GM12878 (cell line): ENCODE measurements at regions of chrX and their contacts with region 1.

Region 1: GRCh38 chrX:101442085-101442484 is 34.1 kb downstream of the HNRNPH2 start:
- DNase-seq: no peak
- ATAC-seq: no peak
- H3K4me3 ChIP-seq: no peak overlapping the region
- H3K27ac ChIP-seq: no peak overlapping the region
- H3K4me1 ChIP-seq: no peaks in the 10 kb centered on the region
- H3K27me3 ChIP-seq: no peaks in the 10 kb centered on the region
- CTCF ChIP-seq: no peak
- EP300 ChIP-seq: no peak
- POLR2A ChIP-seq: no peak
- RAD21 ChIP-seq: no peak

Region 2: DNA sequence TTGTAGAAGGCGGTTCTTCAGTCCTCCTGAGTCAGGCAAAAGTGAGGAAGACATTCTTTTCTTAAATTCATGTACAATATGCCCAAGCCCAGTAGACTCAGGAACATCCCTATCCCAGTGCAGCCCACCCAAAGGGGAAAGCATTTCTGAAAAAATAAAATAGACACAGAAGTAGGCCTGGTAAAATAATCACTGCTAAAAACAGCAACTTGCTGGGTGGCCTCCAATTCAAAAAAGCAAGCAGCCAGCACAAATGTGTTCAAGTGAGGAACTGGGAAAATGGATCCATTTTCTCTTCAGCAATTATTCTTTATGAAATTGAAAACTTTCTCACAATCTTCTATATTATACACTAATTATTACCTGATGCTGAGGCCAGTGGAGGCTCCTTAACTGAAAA is 1197.4 kb before region 1 on chrX:
- CTCF ChIA-PET with region 1: no interaction called
- POLR2A ChIA-PET with region 1: no interaction called
- RAD21 ChIA-PET with region 1: no interaction called
- SMC1A ChIA-PET with region 1: no interaction called
- in situ Hi-C with region 1: no loop called
- intact Hi-C with region 1: no loop called
- DNase-seq: no peak
- ATAC-seq: no peak
- H3K4me3 ChIP-seq: no peak overlapping the region
- H3K27ac ChIP-seq: no peak overlapping the region
- H3K4me1 ChIP-seq: no peaks in the 10 kb centered on the region
- H3K27me3 ChIP-seq: no peaks in the 10 kb centered on the region
- CTCF ChIP-seq: no peak
- EP300 ChIP-seq: no peak
- POLR2A ChIP-seq: no peak
- RAD21 ChIP-seq: no peak

Region 3: GRCh38 chrX:100946299-100946920 is 495.7 kb before region 1 on chrX:
- CTCF ChIA-PET with region 1: no interaction called
- POLR2A ChIA-PET with region 1: interaction called, 13 read pairs
- RAD21 ChIA-PET with region 1: no interaction called
- SMC1A ChIA-PET with region 1: no interaction called
- in situ Hi-C with region 1: no loop called
- intact Hi-C with region 1: no loop called
- DNase-seq: no peak
- ATAC-seq: no peak
- H3K4me3 ChIP-seq: no peak overlapping the region
- H3K27ac ChIP-seq: no peak overlapping the region
- H3K4me1 ChIP-seq: no peaks in the 10 kb centered on the region
- H3K27me3 ChIP-seq: no peaks in the 10 kb centered on the region
- CTCF ChIP-seq: no peak
- EP300 ChIP-seq: no peak
- POLR2A ChIP-seq: no peak
- RAD21 ChIP-seq: no peak

Region 4: GRCh38 chrX:101260431-101260830 is 181.7 kb before region 1 on chrX:
- CTCF ChIA-PET with region 1: no interaction called
- POLR2A ChIA-PET with region 1: no interaction called
- RAD21 ChIA-PET with region 1: no interaction called
- SMC1A ChIA-PET with region 1: no interaction called
- in situ Hi-C with region 1: no loop called
- intact Hi-C with region 1: no loop called
- DNase-seq: no peak
- ATAC-seq: no peak
- H3K4me3 ChIP-seq: no peak overlapping the region
- H3K27ac ChIP-seq: no peak overlapping the region
- H3K4me1 ChIP-seq: no peaks in the 10 kb centered on the region
- H3K27me3 ChIP-seq: no peaks in the 10 kb centered on the region
- CTCF ChIP-seq: no peak; a peak in 1 of 6 replicates
- EP300 ChIP-seq: no peak
- POLR2A ChIP-seq: no peak
- RAD21 ChIP-seq: peak; percentile 11; the same call in 1 of the 2 replicates